ENCODE measurements at regions of chr17 and their contacts with region 1.

Region 1: GRCh38 chr17:58377093-58377601 is 25.1 kb upstream of the SUPT4H1 start:
- DNase-seq: no peak
- CTCF ChIP-seq: no peak

Region 2: GRCh38 chr17:58224315-58224714 is 152.8 kb before region 1 on chr17:
- CTCF ChIA-PET with region 1: no interaction called
- POLR2A ChIA-PET with region 1: no interaction called
- DNase-seq: no peak
- CTCF ChIP-seq: no peak

Region 3: DNA sequence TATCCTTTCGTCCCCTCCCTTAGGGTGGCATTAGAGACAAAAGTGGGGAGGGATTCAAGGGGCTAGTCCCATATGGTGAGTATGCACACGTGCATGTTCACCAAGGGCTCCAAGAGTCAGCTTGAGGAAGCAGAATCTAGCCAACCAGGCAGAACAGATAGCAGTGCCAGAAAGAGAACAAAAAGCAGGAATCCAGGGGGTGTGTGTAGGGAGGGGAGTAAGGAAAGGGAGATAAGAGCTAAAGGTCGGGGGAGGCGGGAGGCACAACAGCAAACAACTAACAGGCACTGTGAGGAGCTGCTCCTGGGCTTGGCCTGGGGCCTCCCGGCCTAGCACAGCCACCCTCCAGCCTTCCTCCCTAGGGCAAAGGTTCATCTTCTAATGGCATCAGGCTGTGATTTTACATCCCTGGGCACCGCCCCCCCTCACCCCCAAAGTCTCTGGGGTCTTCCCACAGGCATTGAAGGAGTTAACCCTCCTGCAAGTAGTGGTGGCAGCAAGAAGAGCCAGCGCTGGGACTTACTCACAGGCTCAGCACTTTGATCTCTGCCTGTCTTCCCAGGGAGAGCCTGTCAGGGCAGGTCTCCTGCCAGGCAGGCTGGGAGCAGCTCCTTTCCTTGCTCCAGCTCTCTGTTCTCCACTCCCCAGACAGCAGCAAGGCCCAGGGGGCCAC is 12.7 kb before region 1 on chr17:
- CTCF ChIA-PET with region 1: interaction called, 27 read pairs
- POLR2A ChIA-PET with region 1: no interaction called
- DNase-seq: no peak
- CTCF ChIP-seq: no peak

Region 4: GRCh38 chr17:58503656-58504300 is 126.6 kb after region 1 on chr17:
- CTCF ChIA-PET with region 1: no interaction called
- POLR2A ChIA-PET with region 1: no interaction called
- DNase-seq: no peak
- CTCF ChIP-seq: no peak